Activated CD4-positive, alpha-beta T cell treated with anti-CD3 and anti-CD28 coated beads, Interleukin-2, amount 10 ng/mL, durations not matched to agents 24 days and 14 days (primary cell): ENCODE measurements at regions of chr10 and their contacts with region 1.

Region 1: DNA sequence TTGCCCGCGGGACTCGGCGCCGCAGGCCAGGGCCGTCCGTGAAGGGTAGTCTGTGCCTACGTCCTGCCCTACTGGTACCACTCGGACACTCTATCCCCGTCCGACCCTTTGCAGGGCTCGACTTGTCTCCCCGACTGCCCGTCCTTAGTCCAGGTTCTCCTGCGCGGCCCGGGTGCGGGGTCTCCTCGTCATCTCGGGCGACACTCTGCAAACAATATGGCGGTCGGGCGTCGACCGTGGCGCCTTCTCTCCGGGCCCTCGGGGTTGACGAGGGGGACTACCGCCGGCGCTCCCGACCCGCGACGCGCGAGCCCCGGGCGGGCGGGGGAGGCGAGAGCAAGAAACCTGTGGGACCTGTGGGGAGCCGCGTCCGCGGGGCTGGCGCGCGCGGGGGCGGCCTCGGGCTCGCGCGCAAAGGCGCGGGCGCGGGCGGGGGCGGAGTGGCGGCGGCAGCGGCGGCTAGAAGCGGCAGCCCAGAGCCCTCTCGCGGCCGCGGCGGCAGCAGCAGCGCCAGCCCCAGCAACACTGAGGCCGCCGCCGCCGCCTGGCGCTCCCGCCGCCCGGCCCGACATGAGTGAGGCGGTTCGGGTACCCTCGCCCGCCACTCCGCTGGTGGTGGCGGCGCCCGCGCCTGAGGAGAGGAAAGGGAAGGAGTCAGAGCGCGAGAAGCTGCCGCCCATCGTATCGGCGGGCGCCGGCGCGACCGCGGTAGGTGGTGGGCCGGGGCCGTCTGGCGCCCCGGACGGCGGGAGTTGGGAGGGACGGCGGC is at the start of gene HECTD2:
- DNase-seq: peak; percentile 94
- H3K4me3 Mint-ChIP-seq: peak within 1 kb of the TSS; percentile 93
- H3K27ac Mint-ChIP-seq: peak within 1 kb of the TSS; percentile 96
- H3K4me1 Mint-ChIP-seq: peaks cover 17% of the 10 kb centered on the region
- H3K27me3 Mint-ChIP-seq: peaks cover 25% of the 10 kb centered on the region
- total RNA-seq, gene HECTD2: 4.5 and 5.5 TPM in 2 replicates

Region 2: GRCh38 chr10:91424016-91424415 is 14.0 kb after region 1 on chr10:
- intact Hi-C with region 1: loop called (anchors 1 kb)
- DNase-seq: no peak
- H3K4me3 Mint-ChIP-seq: no peak overlapping the region
- H3K27ac Mint-ChIP-seq: no peak overlapping the region
- H3K4me1 Mint-ChIP-seq: peaks cover 9% of the 10 kb centered on the region
- H3K27me3 Mint-ChIP-seq: no peaks in the 10 kb centered on the region